Activated CD4-positive, alpha-beta T cell treated with anti-CD3 and anti-CD28 coated beads for 36 hours (primary cell): ENCODE measurements at regions of chr13 and their contacts with region 1.

Region 1: GRCh38 chr13:99269627-99270241 is 11.6 kb upstream of the GPR18 start:
- DNase-seq: peak; percentile 41
- ATAC-seq: peak; percentile 56
- H3K4me3 Mint-ChIP-seq: no peak overlapping the region
- H3K27ac Mint-ChIP-seq: no peak overlapping the region
- H3K4me1 Mint-ChIP-seq: peaks cover 70% of the 10 kb centered on the region
- H3K27me3 Mint-ChIP-seq: no peaks in the 10 kb centered on the region

Region 2: DNA sequence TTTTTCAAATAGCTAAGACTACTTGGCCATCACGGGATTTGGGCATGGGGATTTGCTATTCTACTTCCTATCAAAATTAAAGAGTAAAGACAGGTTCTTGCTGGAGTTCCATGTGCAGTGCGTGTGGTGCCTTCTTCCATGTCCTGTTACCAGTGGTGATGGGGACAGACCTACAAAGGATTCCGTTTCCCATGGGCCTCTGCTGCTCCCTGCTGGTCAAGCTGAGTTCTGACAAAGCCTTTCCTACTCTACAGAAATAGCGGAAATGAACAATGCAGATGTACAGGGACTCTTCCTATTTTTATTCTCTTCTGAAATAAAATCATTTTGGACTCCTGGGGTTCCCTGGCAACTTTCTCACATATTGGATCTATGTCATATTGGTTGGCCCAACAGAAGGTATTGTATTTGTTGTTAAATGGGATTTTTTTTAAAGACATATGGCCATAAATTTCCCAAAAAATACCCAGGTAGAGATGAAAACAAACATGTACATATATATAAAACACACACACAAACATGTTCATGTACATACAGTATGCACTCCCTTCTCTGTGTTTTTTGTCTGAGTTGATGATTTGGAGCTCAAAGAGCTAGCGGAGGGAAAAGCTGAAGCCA is 426.8 kb before region 1 on chr13:
- CTCF ChIA-PET with region 1: interaction called, 3 read pairs
- POLR2A ChIA-PET with region 1: no interaction called
- intact Hi-C with region 1: loop called in 1 of 2 experiments (anchors 5 kb)
- DNase-seq: peak; percentile 86
- ATAC-seq: peak; percentile 88
- H3K4me3 Mint-ChIP-seq: no peak overlapping the region
- H3K27ac Mint-ChIP-seq: no peak overlapping the region
- H3K4me1 Mint-ChIP-seq: no peaks in the 10 kb centered on the region
- H3K27me3 Mint-ChIP-seq: no peaks in the 10 kb centered on the region

Region 3: GRCh38 chr13:99033814-99034213 is 235.9 kb before region 1 on chr13:
- CTCF ChIA-PET with region 1: interaction called, 10 read pairs
- POLR2A ChIA-PET with region 1: no interaction called
- intact Hi-C with region 1: loop called in 1 of 2 experiments (anchors 10 kb)
- DNase-seq: no peak
- ATAC-seq: peak; percentile 56
- H3K4me3 Mint-ChIP-seq: no peak overlapping the region
- H3K27ac Mint-ChIP-seq: no peak overlapping the region
- H3K4me1 Mint-ChIP-seq: peaks cover 51% of the 10 kb centered on the region
- H3K27me3 Mint-ChIP-seq: no peaks in the 10 kb centered on the region

Region 4: GRCh38 chr13:99191879-99192399 is 77.8 kb before region 1 on chr13:
- CTCF ChIA-PET with region 1: interaction called, 12 read pairs
- POLR2A ChIA-PET with region 1: no interaction called
- intact Hi-C with region 1: no loop called
- DNase-seq: no peak
- ATAC-seq: no peak
- H3K4me3 Mint-ChIP-seq: no peak overlapping the region
- H3K27ac Mint-ChIP-seq: no peak overlapping the region
- H3K4me1 Mint-ChIP-seq: peaks cover 10% of the 10 kb centered on the region
- H3K27me3 Mint-ChIP-seq: no peaks in the 10 kb centered on the region

Region 5: DNA sequence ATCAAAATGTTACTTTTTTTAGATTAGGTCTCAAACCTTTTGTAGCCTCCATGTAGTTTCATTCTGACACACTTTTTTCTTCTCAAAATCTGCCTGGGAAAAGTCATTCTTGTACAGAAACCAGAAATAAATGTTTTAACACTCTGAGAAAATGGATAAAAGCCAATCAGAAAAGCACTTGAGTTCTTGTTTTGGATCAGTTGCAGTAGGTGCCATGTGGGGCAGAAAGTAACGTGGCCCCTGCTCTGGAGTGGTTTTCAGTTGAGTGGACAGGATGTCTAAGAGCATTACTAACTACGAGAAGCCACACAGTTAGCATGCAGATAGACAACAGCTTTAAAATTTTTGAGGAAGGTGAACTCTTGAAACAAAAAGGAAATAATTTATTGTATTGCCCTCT is 18.4 kb after region 1 on chr13:
- CTCF ChIA-PET with region 1: interaction called, 49 read pairs
- POLR2A ChIA-PET with region 1: interaction called, 5 read pairs
- intact Hi-C with region 1: no loop called
- DNase-seq: peak; percentile 87
- ATAC-seq: peak; percentile 79
- H3K4me3 Mint-ChIP-seq: no peak overlapping the region
- H3K27ac Mint-ChIP-seq: peak overlapping the region; percentile 90
- H3K4me1 Mint-ChIP-seq: peaks cover 91% of the 10 kb centered on the region
- H3K27me3 Mint-ChIP-seq: no peaks in the 10 kb centered on the region

Region 6: DNA sequence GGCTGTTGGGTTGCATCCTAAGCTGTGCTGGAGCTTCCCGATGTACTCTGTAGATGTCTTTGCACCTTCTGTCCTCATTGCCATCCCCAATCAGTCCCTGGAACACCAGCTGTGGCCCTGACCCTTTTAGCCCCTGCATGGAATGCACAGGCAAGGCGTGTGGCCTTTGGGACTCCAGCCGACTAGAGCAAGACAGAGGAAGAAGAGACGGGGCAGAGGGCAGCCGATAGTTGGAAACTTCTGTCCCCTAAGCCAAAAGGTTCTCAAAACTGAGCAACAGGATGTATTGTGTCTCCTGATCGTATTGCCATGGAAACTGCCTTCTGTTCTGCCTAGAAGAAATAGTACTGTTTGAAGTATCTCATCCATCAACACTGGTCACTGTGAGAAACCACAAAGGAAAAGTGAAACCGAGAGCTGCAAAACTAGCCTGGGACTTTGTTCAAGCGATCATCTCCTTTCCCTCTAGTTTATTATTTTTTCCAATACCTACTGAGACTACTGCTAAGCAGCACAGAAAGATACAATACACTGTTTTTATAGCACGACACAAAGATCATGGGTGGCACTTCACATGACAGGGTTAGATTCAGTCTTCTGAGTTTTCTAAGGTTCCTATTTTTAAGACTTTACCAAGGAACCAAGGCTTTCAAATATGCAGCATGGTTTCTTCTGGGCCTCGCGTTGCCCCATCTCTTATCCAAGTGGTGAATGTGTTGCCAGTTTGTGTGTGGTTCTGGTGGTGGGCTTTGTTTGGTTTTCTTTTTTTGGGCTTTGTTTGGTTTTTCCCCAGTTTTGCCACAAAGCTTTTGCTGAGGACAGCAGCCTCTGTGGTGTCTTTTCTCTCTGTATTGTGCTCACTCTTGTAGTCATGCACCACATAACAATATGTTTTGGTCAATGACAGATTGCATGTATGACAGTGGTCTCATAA is 86.7 kb after region 1 on chr13:
- CTCF ChIA-PET with region 1: interaction called, 15 read pairs
- POLR2A ChIA-PET with region 1: interaction called, 9 read pairs
- intact Hi-C with region 1: loop called (anchors 1 to 2 kb)
- DNase-seq: peak; percentile 48
- ATAC-seq: peak; percentile 25
- H3K4me3 Mint-ChIP-seq: peak overlapping the region; percentile 42
- H3K27ac Mint-ChIP-seq: peak overlapping the region; percentile 92
- H3K4me1 Mint-ChIP-seq: peaks cover 99% of the 10 kb centered on the region
- H3K27me3 Mint-ChIP-seq: no peaks in the 10 kb centered on the region

Region 7: DNA sequence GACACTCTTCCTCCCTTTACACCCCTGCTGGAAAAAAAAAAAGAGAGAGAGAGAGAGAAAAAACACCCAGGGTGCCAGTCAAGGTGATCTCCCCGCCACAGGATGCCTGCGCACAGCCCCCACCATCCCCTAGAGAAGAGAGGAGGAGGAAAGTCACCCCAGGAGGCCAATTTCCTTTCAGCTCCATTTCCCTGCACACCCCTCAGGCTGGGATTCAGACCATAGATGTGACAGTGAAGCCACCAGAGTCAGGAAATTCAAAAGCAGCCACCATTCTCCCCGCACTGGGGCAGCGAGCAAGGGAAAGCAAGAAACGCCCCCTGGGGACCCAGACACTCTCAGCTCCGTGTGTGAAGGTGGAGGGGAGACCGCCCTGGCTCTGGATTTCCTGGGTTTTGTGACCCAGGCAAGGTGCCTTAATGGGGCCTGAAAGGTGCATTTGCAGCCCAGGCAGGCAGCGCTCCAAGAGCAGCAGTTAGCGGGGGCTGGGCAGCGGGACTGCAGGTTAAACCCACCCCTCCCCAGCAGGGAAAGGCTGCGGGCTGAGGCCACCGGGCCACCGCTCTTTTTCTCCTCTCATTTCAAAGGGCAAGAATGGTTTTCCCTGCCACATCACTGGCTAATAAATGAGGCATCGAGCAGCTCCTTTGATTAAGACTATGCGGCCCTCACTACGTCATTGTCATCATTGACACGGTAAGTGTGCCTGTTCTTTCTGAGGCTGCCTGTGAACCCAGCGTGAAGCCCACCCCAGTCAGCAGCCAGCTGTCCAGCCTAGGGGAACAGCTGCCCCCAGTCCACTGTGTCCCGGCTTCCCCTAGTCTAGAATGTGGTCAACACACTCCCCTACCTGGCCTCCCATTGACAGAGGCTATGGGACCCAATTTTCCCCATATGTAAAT is 147.7 kb after region 1 on chr13:
- CTCF ChIA-PET with region 1: interaction called, 14 read pairs
- POLR2A ChIA-PET with region 1: no interaction called
- intact Hi-C with region 1: no loop called
- DNase-seq: peak; percentile 57
- ATAC-seq: peak; percentile 2
- H3K4me3 Mint-ChIP-seq: no peak overlapping the region
- H3K27ac Mint-ChIP-seq: no peak overlapping the region
- H3K4me1 Mint-ChIP-seq: peaks cover 62% of the 10 kb centered on the region
- H3K27me3 Mint-ChIP-seq: no peaks in the 10 kb centered on the region

Region 8: DNA sequence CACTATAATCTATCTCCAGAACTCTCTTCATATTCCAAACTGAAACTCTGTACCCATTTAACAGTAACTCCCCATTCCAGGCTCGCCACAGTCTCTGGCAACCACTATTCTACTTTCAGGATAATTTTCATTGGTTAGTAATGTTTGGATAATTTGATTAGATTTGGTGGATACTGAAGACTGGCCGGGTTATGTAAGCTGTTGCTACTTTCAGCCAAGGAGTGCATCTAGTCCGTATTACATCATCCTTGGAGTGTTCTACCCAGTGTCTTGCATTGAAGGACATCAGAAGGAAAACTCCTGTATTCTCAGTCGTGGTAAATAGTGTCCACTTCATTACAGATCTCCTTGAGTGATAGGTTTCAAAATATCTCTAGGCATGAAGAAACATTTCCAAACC is 879.7 kb after region 1 on chr13:
- CTCF ChIA-PET with region 1: no interaction called
- POLR2A ChIA-PET with region 1: no interaction called
- intact Hi-C with region 1: no loop called
- DNase-seq: no peak
- ATAC-seq: no peak
- H3K4me3 Mint-ChIP-seq: no peak overlapping the region
- H3K27ac Mint-ChIP-seq: no peak overlapping the region
- H3K4me1 Mint-ChIP-seq: no peaks in the 10 kb centered on the region
- H3K27me3 Mint-ChIP-seq: no peaks in the 10 kb centered on the region